ENCODE measurements at regions of chr17 and their contacts with region 1.

Region 1: DNA sequence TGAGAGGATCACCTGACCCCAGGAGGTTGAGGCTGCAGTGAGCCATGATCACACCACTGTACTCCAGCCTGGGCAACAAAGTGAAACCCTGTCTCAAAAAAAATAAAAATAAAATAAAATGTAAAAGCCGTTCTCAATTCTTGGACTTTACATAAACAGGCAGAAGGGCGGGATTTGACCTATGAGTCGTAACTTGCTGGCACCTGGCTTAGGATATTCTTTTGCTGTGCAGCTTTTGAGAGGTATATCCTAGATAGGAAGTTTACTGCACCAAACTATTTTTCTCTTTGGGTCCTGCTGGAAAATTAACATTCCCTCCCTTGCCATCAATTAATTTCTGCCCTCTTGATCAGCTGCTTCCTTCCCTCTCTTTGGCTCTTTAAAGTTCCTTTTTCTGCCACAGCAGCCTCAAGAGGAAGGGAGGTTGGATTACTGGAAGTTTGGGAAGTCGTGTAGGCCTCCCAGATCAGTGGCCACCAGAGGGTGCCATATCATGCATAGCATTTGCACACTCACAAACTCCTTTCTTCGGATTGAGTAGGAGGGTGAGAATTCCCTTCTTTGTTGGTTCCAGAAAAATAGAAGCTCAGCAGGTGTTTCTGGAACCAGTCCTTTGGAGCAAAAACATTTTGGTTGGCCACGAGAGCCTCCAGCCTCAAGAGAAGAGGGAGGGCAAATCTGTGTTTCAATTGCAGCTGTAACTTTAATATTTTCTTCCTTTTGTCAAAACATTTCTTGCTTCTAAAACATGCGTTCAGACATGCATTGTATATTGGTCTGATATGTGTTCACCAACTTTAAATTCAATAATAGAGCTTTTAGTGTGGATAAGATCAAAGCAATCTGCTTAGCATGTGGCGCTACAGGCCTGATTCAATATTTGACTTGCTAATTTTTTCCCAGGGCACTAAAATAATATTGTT is 147.3 kb downstream of the CCDC182 start:
- DNase-seq: peak; percentile 57 to 81
- ATAC-seq: peak in 7 of 8 donors; percentile 39 to 80 (median 71)
- H3K4me3 ChIP-seq: no peak overlapping the region
- H3K27ac ChIP-seq: peak overlapping the region in 8 of 10 donors; percentile 5 to 65 (median 58)
- H3K4me1 ChIP-seq: peaks cover 0 to 57% (median 34%) of the 10 kb centered on the region in 9 donors
- H3K27me3 ChIP-seq: no peaks in the 10 kb centered on the region
- CTCF ChIP-seq: peak; percentile 67 to 93 (median 85)

Region 2: DNA sequence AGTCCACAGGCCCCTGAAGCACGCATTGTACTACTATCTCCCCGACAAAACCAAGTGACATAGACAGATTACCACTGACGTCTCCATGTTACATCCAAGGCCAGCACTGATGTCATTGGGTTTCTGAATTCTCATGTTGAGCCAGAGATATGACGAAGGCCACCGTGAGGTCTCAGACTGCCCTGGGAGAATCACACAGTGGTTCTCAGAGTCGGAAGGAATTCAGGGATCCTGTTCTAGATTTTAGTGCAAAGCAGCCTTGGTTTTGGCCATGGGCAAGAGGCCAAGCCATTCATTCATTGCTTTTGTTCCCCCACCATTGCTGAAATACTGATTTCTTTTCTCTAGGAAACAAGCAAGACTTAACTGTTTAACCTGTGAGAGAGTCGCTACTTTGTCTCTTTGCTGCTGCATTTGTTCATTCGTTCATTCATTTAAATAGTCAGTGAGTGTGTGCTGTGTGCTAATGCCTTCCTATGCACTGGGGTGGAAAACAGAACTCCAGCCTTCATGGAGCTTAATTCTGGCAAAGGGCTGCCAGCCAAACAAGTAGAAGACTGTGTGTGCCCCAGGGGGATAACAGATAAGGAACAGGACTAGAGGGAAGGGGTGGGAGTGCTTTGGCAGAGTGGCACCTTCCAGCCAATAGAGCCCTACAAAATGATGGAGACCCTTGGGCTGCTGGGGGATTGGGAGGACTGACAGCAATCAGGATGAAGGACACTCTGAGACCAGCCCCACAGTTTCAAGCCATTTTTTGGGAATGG is 119.1 kb before region 1 on chr17:
- intact Hi-C with region 1: loop called in 1 of 10 experiments (anchors 10 kb)
- DNase-seq: peak in 1 of 2 donors; percentile 85
- ATAC-seq: peak; percentile 39 to 88 (median 78)
- H3K4me3 ChIP-seq: no peak overlapping the region
- H3K27ac ChIP-seq: peak overlapping the region in 7 of 10 donors; percentile 48 to 87 (median 61)
- H3K4me1 ChIP-seq: peaks cover 21 to 82% (median 55%) of the 10 kb centered on the region in 9 donors
- H3K27me3 ChIP-seq: no peaks in the 10 kb centered on the region
- CTCF ChIP-seq: no peak

Region 3: DNA sequence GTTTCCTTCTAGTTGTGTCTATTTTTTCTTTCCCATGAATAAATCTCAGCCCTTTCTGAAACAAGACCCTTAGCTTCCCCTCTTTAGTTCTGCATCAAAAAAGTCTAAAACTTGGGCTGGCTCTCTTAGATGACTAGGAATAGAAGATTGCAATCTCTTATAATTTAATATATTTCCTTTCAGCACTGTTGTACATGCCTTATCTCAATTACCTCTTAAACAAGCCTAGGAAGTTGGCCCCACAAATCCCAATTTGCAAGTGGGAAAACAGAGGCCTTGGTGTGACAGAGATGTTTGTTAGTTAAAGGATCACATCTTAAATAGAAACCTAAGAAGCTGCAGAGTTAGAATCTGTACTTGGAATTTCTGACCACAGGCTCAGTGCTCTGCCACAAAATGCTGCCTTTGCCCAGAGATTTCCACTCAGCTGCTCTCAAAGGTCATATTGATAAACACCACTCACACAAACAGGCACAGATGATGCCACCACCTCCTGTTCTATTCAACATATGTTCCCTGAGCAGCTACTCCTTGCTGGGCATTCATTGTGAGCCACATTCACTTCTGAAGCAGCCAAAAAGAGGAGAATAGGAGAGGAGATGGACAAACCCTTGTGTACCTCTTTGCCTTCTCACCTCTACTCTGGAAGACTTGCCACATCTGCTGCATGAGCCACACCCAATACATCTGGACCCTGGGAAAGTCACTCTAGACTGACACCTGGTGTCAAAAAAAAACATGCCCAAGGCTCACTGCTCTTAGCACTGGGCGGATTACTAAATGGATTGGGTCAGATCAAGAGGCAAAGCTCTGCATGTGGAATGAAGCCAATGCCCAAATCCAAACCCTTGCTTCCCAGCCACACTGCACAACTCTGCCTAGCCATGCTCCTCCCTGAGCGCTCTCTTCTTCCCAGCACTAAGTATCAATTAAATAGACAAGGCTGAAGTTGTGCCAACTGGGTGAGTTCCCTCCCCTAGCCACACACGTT is 141.9 kb after region 1 on chr17:
- intact Hi-C with region 1: loop called in 3 of 10 experiments (anchors 10 kb)
- DNase-seq: no peak
- ATAC-seq: peak in 3 of 8 donors; percentile 49 to 66 (median 63)
- H3K4me3 ChIP-seq: no peak overlapping the region
- H3K27ac ChIP-seq: no peak overlapping the region
- H3K4me1 ChIP-seq: no peaks in the 10 kb centered on the region
- H3K27me3 ChIP-seq: peaks cover 0 to 7% (median 0%) of the 10 kb centered on the region in 7 donors
- CTCF ChIP-seq: peak in 7 of 9 donors; percentile 33 to 47 (median 40)

Measured in heart right ventricle (tissue), 16 donors.